ENCODE measurements at regions of chr9 and their contacts with region 1.

Region 1: GRCh38 chr9:133569891-133570690 is 35.6 kb downstream of the ADAMTSL2 start:
- DNase-seq: peak in 1 of 2 donors; percentile 7
- H3K4me3 ChIP-seq: no peak overlapping the region
- H3K27ac ChIP-seq: no peak overlapping the region
- H3K4me1 ChIP-seq: peaks cover 0 to 13% of the 10 kb centered on the region in 2 donors
- H3K27me3 ChIP-seq: no peaks in the 10 kb centered on the region
- CTCF ChIP-seq: no peak
- POLR2A ChIP-seq: no peak

Region 2: GRCh38 chr9:133658442-133659431 is 88.6 kb after region 1 on chr9:
- intact Hi-C with region 1: loop called (anchors 5 kb)
- DNase-seq: peak; percentile 53 to 62
- H3K4me3 ChIP-seq: no peak overlapping the region
- H3K27ac ChIP-seq: no peak overlapping the region
- H3K4me1 ChIP-seq: peaks cover 26 to 37% of the 10 kb centered on the region in 2 donors
- H3K27me3 ChIP-seq: no peaks in the 10 kb centered on the region
- CTCF ChIP-seq: no peak
- POLR2A ChIP-seq: no peak

Region 3: GRCh38 chr9:134188386-134189144 is 618.5 kb after region 1 on chr9:
- intact Hi-C with region 1: no loop called
- DNase-seq: peak; percentile 62 to 63
- H3K4me3 ChIP-seq: no peak overlapping the region
- H3K27ac ChIP-seq: no peak overlapping the region
- H3K4me1 ChIP-seq: peaks cover 0 to 26% of the 10 kb centered on the region in 2 donors
- H3K27me3 ChIP-seq: no peaks in the 10 kb centered on the region
- CTCF ChIP-seq: no peak
- POLR2A ChIP-seq: no peak

Measured in thyroid gland (tissue), 4 donors.